ENCODE measurements at regions of chr9 and their contacts with region 1.

Region 1: GRCh38 chr9:27529316-27530278 is at the start of gene MOB3B:
- DNase-seq: peak; percentile 83 to 88
- ATAC-seq: peak; percentile 72 to 95 (median 89)
- H3K4me3 ChIP-seq: peak within 1 kb of the TSS; percentile 48 to 83 (median 75)
- H3K27ac ChIP-seq: peak within 1 kb of the TSS; percentile 19 to 87 (median 78)
- H3K4me1 ChIP-seq: peaks cover 0 to 27% (median 7%) of the 10 kb centered on the region in 9 donors
- H3K27me3 ChIP-seq: no peaks in the 10 kb centered on the region
- CTCF ChIP-seq: peak; percentile 92 to 98 (median 96)
- total RNA-seq, gene MOB3B: 0.86 to 2.3 (median 1.4) TPM

Region 2: DNA sequence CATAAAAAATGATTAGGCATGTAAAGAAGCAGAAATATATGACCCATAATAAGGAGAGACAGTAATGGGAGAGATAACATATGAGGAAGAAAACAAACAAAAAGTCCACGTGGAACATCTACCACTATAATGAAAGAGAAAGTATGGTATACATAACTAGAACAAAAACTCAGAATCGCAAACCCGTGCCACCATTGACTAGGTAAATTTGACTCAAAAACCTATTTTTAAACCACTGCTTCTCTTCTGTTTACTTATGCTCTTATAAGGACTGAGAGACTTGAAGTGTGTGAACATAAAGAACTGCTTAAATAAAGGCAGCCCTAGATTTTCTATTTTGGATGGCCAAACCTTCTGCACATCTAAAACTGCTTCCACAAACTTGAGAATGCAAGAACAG is 967.7 kb before region 1 on chr9:
- intact Hi-C with region 1: no loop called
- DNase-seq: no peak
- ATAC-seq: no peak
- H3K4me3 ChIP-seq: no peak overlapping the region
- H3K27ac ChIP-seq: no peak overlapping the region
- H3K4me1 ChIP-seq: no peaks in the 10 kb centered on the region
- H3K27me3 ChIP-seq: peaks cover 0 to 3% (median 0%) of the 10 kb centered on the region in 7 donors
- CTCF ChIP-seq: no peak

Region 3: GRCh38 chr9:27333241-27334052 is 196.2 kb before region 1 on chr9:
- intact Hi-C with region 1: loop called (anchors 1 to 5 kb)
- DNase-seq: peak in 1 of 2 donors; percentile 62
- ATAC-seq: peak; percentile 83 to 94 (median 88)
- H3K4me3 ChIP-seq: no peak overlapping the region
- H3K27ac ChIP-seq: no peak overlapping the region
- H3K4me1 ChIP-seq: peaks cover 3 to 24% (median 16%) of the 10 kb centered on the region in 9 donors
- H3K27me3 ChIP-seq: no peaks in the 10 kb centered on the region
- CTCF ChIP-seq: peak; percentile 83 to 95 (median 90)

Region 4: DNA sequence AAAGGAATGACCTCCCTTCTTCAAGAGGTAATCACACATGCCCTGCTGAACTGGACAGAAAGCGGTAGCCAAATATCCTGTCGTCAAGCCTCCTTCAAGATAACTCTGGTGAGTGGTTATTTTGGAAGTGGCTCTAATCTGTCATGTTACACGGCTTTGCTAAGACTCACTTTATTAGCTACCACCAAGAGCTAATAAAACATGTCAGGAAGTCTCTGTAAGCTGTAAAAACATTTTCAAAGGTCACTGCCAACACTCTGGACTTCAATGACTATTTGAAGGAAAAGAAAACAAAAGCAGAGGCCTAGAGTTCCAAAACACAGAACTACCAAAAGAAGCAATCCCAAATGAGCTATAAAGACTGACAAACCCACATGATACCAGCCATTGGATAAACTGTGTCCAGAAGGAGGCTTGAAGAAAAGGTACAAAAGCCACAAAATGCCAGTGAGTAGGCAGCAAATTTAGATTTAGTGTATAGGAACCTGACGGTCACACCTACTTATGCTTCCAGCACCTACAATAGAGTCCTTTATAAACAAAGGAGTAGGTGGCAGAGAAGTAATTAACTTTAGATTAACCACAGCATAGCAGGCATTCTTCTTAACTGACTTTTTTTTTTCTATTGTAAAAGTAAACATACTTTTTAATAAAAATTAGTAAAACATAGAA is 135.3 kb before region 1 on chr9:
- intact Hi-C with region 1: loop called in 1 of 10 experiments (anchors 5 kb)
- DNase-seq: peak in 1 of 2 donors; percentile 10
- ATAC-seq: peak; percentile 33 to 85 (median 68)
- H3K4me3 ChIP-seq: no peak overlapping the region
- H3K27ac ChIP-seq: peak overlapping the region in 3 of 10 donors; percentile 3 to 46 (median 39)
- H3K4me1 ChIP-seq: peaks cover 0 to 28% (median 18%) of the 10 kb centered on the region in 9 donors
- H3K27me3 ChIP-seq: no peaks in the 10 kb centered on the region
- CTCF ChIP-seq: no peak

Region 5: GRCh38 chr9:27436234-27436633 is 93.4 kb before region 1 on chr9:
- intact Hi-C with region 1: loop called in 1 of 10 experiments (anchors 10 kb)
- DNase-seq: no peak
- ATAC-seq: peak in 2 of 8 donors; percentile 37 to 53
- H3K4me3 ChIP-seq: no peak overlapping the region
- H3K27ac ChIP-seq: no peak overlapping the region
- H3K4me1 ChIP-seq: peaks cover 0 to 55% (median 21%) of the 10 kb centered on the region in 9 donors
- H3K27me3 ChIP-seq: no peaks in the 10 kb centered on the region
- CTCF ChIP-seq: no peak

Region 6: GRCh38 chr9:27460226-27461023 is 69.2 kb before region 1 on chr9:
- intact Hi-C with region 1: loop called in 1 of 10 experiments (anchors 10 kb)
- DNase-seq: peak in 1 of 2 donors; percentile 12
- ATAC-seq: peak in 6 of 8 donors; percentile 31 to 79 (median 64)
- H3K4me3 ChIP-seq: no peak overlapping the region
- H3K27ac ChIP-seq: peak overlapping the region in 1 of 10 donors; percentile 32
- H3K4me1 ChIP-seq: peaks cover 0 to 36% (median 16%) of the 10 kb centered on the region in 9 donors
- H3K27me3 ChIP-seq: no peaks in the 10 kb centered on the region
- CTCF ChIP-seq: no peak

Region 7: GRCh38 chr9:27473111-27473529 is 56.5 kb before region 1 on chr9:
- intact Hi-C with region 1: loop called in 2 of 10 experiments (anchors 10 kb)
- DNase-seq: peak in 1 of 2 donors; percentile 21
- ATAC-seq: peak; percentile 29 to 80 (median 58)
- H3K4me3 ChIP-seq: no peak overlapping the region
- H3K27ac ChIP-seq: peak overlapping the region in 2 of 10 donors; percentile 9 to 12
- H3K4me1 ChIP-seq: peaks cover 0 to 49% (median 25%) of the 10 kb centered on the region in 9 donors
- H3K27me3 ChIP-seq: no peaks in the 10 kb centered on the region
- CTCF ChIP-seq: no peak

Region 8: GRCh38 chr9:27487927-27488326 is 41.7 kb before region 1 on chr9:
- intact Hi-C with region 1: loop called in 1 of 10 experiments (anchors 1 kb)
- DNase-seq: no peak
- ATAC-seq: no peak
- H3K4me3 ChIP-seq: no peak overlapping the region
- H3K27ac ChIP-seq: no peak overlapping the region
- H3K4me1 ChIP-seq: no peaks in the 10 kb centered on the region
- H3K27me3 ChIP-seq: no peaks in the 10 kb centered on the region
- CTCF ChIP-seq: no peak

Measured in heart right ventricle (tissue), 16 donors.